Posterior vena cava (tissue), 2 donors: ENCODE measurements at regions of chr10 and their contacts with region 1.

Region 1: DNA sequence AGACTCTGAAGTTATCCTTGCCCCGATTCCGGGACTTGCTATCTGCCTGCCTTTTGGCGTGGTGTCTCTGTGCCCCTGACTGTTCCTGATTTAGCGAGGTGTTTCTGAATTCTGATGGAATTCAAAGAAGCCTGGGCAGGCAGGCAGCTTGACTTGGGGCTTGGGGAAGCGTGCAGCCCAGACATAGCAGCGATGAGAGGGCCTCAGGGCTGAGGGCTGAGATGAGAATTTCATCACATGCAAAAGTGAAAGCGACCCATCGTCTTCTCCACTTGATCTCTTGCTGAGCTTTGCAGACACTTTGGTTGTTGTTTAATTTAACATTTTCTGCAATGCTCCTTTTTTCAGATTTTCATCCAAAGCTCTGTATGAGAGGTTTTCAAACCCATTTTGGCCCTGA is 57.8 kb downstream of the TCF7L2 start:
- DNase-seq: no peak

Region 2: GRCh38 chr10:112059220-112059619 is 948.6 kb before region 1 on chr10:
- intact Hi-C with region 1: no loop called
- DNase-seq: no peak

Region 3: GRCh38 chr10:113056441-113057021 is 48.7 kb after region 1 on chr10:
- intact Hi-C with region 1: loop called in 1 of 2 experiments (anchors 1 kb)
- DNase-seq: no peak